Activated CD8-positive, alpha-beta memory T cell treated with anti-CD3 and anti-CD28 coated beads, Interleukin-2, amount 10 ng/mL, durations not matched to agents 7 days and 5 days (primary cell): ENCODE measurements at regions of chr11 and their contacts with region 1.

Region 1: GRCh38 chr11:119205574-119206510 is at the start of gene CBL:
- DNase-seq: peak; percentile 97
- ATAC-seq: peak; percentile 88
- H3K4me3 Mint-ChIP-seq: peak within 1 kb of the TSS; percentile 99
- H3K27ac Mint-ChIP-seq: peak within 1 kb of the TSS; percentile 88
- H3K4me1 Mint-ChIP-seq: peaks cover 29% of the 10 kb centered on the region
- H3K27me3 Mint-ChIP-seq: no peaks in the 10 kb centered on the region
- total RNA-seq, gene CBL: 40.0 to 49.2 TPM

Region 2: GRCh38 chr11:119168471-119169281 is 37.2 kb before region 1 on chr11 and contains the start of gene NLRX1:
- CTCF ChIA-PET with region 1: interaction called, 12 read pairs
- DNase-seq: peak; percentile 91
- ATAC-seq: peak; percentile 95
- H3K4me3 Mint-ChIP-seq: peak within 1 kb of the TSS; percentile 85
- H3K27ac Mint-ChIP-seq: peak within 1 kb of the TSS; percentile 91
- H3K4me1 Mint-ChIP-seq: peaks cover 20% of the 10 kb centered on the region
- H3K27me3 Mint-ChIP-seq: no peaks in the 10 kb centered on the region
- total RNA-seq, gene NLRX1: 21.2 to 22.2 TPM

Region 3: GRCh38 chr11:119262668-119263351 is 57.0 kb after region 1 on chr11:
- CTCF ChIA-PET with region 1: interaction called, 59 read pairs
- DNase-seq: peak; percentile 45
- ATAC-seq: peak; percentile 82
- H3K4me3 Mint-ChIP-seq: no peak overlapping the region
- H3K27ac Mint-ChIP-seq: no peak overlapping the region
- H3K4me1 Mint-ChIP-seq: peaks cover 57% of the 10 kb centered on the region
- H3K27me3 Mint-ChIP-seq: no peaks in the 10 kb centered on the region

Region 4: GRCh38 chr11:119273721-119274120 is 67.9 kb after region 1 on chr11:
- CTCF ChIA-PET with region 1: interaction called, 30 read pairs
- DNase-seq: no peak
- ATAC-seq: no peak
- H3K4me3 Mint-ChIP-seq: no peak overlapping the region
- H3K27ac Mint-ChIP-seq: no peak overlapping the region
- H3K4me1 Mint-ChIP-seq: no peaks in the 10 kb centered on the region
- H3K27me3 Mint-ChIP-seq: no peaks in the 10 kb centered on the region

Region 5: GRCh38 chr11:119284344-119285157 is 78.7 kb after region 1 on chr11:
- CTCF ChIA-PET with region 1: interaction called, 85 read pairs
- DNase-seq: no peak
- ATAC-seq: peak; percentile 93
- H3K4me3 Mint-ChIP-seq: no peak overlapping the region
- H3K27ac Mint-ChIP-seq: peak overlapping the region; percentile 27
- H3K4me1 Mint-ChIP-seq: peaks cover 24% of the 10 kb centered on the region
- H3K27me3 Mint-ChIP-seq: no peaks in the 10 kb centered on the region